PC-9 (cell line): ENCODE measurements at regions of chr17 and their contacts with region 1.

Region 1: DNA sequence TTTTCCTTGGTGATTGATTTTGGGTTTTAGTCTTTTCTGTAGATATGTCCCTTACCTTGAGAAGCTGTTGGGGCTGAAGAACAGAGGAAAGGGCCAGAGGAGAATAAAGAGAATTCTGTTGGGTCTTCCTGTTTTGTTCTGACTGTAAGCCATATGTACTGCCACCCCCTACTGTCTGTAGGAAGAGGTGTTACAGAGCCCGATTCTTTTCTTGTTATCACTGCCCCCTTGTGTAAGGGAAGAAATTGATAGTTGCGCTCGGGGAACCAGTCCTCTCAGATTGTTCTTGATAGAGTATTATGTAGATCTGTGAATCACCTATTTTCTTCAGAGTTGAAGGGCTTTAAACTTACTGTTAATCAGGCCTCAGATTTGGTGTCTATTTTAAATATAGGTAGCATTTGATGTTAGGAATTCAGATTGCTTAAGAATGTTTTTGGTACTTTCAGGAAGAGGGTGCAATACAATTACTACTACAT is 2.4 kb downstream of the TANC2 start:
- DNase-seq: peak; percentile 50 to 84
- H3K4me3 ChIP-seq: peak overlapping the region; percentile 88
- H3K27ac ChIP-seq: peak overlapping the region; percentile 60
- H3K4me1 ChIP-seq: peaks cover 39% of the 10 kb centered on the region
- H3K27me3 ChIP-seq: no peaks in the 10 kb centered on the region
- CTCF ChIP-seq: peak; percentile 86

Region 2: GRCh38 chr17:62671583-62672312 is 296.7 kb before region 1 on chr17:
- CTCF ChIA-PET with region 1: no interaction called
- POLR2A ChIA-PET with region 1: no interaction called
- intact Hi-C with region 1: loop called (anchors 1 kb)
- DNase-seq: peak in 1 of 2 experiments; percentile 50
- H3K4me3 ChIP-seq: no peak overlapping the region
- H3K27ac ChIP-seq: no peak overlapping the region
- H3K4me1 ChIP-seq: no peaks in the 10 kb centered on the region
- H3K27me3 ChIP-seq: no peaks in the 10 kb centered on the region
- CTCF ChIP-seq: no peak

Region 3: GRCh38 chr17:62755141-62755851 is 213.2 kb before region 1 on chr17:
- CTCF ChIA-PET with region 1: no interaction called
- POLR2A ChIA-PET with region 1: no interaction called
- intact Hi-C with region 1: no loop called
- DNase-seq: no peak
- H3K4me3 ChIP-seq: no peak overlapping the region
- H3K27ac ChIP-seq: no peak overlapping the region
- H3K4me1 ChIP-seq: peaks cover 18% of the 10 kb centered on the region
- H3K27me3 ChIP-seq: no peaks in the 10 kb centered on the region
- CTCF ChIP-seq: no peak

Region 4: DNA sequence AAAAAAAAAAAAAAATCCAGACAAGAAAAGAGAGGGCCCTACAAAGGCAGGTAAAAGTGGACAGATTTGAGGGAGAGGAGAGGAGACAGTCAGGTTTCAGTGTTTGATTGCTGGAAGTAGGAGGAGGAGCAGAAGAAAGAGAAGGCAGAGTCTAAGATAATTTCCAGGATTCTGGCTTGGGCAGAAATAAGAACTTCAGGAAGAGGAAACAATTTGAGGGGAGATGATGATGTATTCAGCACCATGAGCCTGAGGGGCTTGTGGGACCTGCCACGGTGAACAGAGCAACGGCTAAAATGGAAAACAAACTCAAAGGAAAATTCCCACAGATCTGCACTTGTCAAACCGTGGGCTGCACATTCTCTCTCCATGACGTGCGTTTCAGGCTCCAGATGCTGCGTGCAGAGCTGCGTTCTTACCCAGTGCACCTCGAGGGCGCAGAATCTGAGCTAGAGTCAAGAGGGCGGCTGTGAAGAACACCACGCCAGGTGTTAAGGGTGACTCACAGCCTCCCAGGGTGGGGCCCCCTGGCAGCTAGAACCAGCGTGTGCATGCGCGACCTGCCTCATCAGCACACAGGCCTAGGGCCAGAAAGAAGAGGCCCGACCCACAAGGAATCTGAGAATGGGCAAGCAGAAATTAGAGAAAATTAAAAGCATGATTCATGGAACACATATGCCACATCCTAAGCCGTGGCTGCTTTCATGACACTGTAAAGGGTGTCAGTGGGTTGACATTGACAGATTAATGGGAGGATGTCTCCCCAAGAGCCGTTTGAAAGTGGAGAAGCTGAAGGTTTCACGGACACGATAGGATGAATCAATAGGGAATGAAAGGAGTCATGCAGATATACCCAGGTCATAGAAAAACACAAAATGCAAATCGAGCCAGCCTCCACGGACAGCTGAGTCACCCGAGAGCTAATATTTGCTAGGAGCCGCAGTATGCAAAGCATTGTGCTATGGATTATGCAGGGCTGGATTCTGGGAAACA is 189.5 kb before region 1 on chr17:
- CTCF ChIA-PET with region 1: no interaction called
- POLR2A ChIA-PET with region 1: no interaction called
- intact Hi-C with region 1: loop called (anchors 5 kb)
- DNase-seq: peak; percentile 89 to 98
- H3K4me3 ChIP-seq: peak overlapping the region; percentile 22; the same call in 1 of the 2 replicates
- H3K27ac ChIP-seq: peak overlapping the region; percentile 98
- H3K4me1 ChIP-seq: peaks cover 55% of the 10 kb centered on the region
- H3K27me3 ChIP-seq: no peaks in the 10 kb centered on the region
- CTCF ChIP-seq: no peak

Region 5: GRCh38 chr17:62791751-62792445 is 176.6 kb before region 1 on chr17:
- CTCF ChIA-PET with region 1: no interaction called
- POLR2A ChIA-PET with region 1: interaction called, 3 read pairs
- intact Hi-C with region 1: loop called (anchors 1 kb)
- DNase-seq: peak; percentile 67 to 98
- H3K4me3 ChIP-seq: peak overlapping the region; percentile 21; the same call in 1 of the 2 replicates
- H3K27ac ChIP-seq: peak overlapping the region; percentile 94
- H3K4me1 ChIP-seq: peaks cover 47% of the 10 kb centered on the region
- H3K27me3 ChIP-seq: no peaks in the 10 kb centered on the region
- CTCF ChIP-seq: no peak

Region 6: GRCh38 chr17:62860907-62861848 is 107.3 kb before region 1 on chr17:
- CTCF ChIA-PET with region 1: interaction called, 3 read pairs
- POLR2A ChIA-PET with region 1: no interaction called
- intact Hi-C with region 1: loop called (anchors 1 kb)
- DNase-seq: peak; percentile 79 to 94
- H3K4me3 ChIP-seq: peak overlapping the region; percentile 32; the same call in 1 of the 2 replicates
- H3K27ac ChIP-seq: peak overlapping the region; percentile 80
- H3K4me1 ChIP-seq: peaks cover 54% of the 10 kb centered on the region
- H3K27me3 ChIP-seq: no peaks in the 10 kb centered on the region
- CTCF ChIP-seq: no peak

Region 7: GRCh38 chr17:63275318-63275970 is 307.0 kb after region 1 on chr17:
- CTCF ChIA-PET with region 1: no interaction called
- POLR2A ChIA-PET with region 1: no interaction called
- intact Hi-C with region 1: no loop called
- DNase-seq: peak; percentile 32 to 95
- H3K4me3 ChIP-seq: no peak overlapping the region
- H3K27ac ChIP-seq: peak overlapping the region; percentile 87
- H3K4me1 ChIP-seq: peaks cover 35% of the 10 kb centered on the region
- H3K27me3 ChIP-seq: no peaks in the 10 kb centered on the region
- CTCF ChIP-seq: no peak